Activated B cell treated with CpG ODN at 0.5 μM for 24 hours (primary cell): ENCODE measurements at regions of chr6 and their contacts with region 1.

Region 1: GRCh38 chr6:45714741-45715507 is 300.7 kb downstream of the CLIC5 start:
- DNase-seq: no peak
- ATAC-seq: peak; percentile 40
- H3K4me3 Mint-ChIP-seq: no peak overlapping the region
- H3K27ac Mint-ChIP-seq: no peak overlapping the region
- H3K4me1 Mint-ChIP-seq: peaks cover 29% of the 10 kb centered on the region
- H3K27me3 Mint-ChIP-seq: no peaks in the 10 kb centered on the region
- CTCF ChIP-seq: no peak

Region 2: DNA sequence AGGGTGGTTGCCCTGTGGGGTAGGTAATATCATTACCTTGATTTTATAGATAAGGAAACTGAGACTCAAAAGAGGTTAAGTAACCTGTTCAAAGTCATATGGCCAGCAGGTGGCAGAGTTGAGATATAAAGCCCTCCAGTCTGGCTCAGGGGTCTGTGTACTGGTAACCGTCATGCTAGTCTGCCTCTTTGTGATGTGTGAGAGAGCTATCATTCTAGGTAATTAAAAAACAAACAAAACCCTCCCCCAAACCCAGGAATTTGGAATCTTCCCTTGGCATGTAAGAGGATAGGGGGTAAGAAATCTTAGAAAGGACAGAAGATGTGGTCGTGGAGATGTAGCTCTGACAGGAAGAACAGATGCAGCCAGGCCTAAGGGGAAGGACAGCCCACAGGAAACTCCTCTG is 1121.4 kb before region 1 on chr6:
- CTCF ChIA-PET with region 1: interaction called, 12 read pairs
- POLR2A ChIA-PET with region 1: no interaction called
- intact Hi-C with region 1: loop called (anchors 1 kb)
- DNase-seq: no peak
- ATAC-seq: peak; percentile 42
- H3K4me3 Mint-ChIP-seq: no peak overlapping the region
- H3K27ac Mint-ChIP-seq: no peak overlapping the region
- H3K4me1 Mint-ChIP-seq: no peaks in the 10 kb centered on the region
- H3K27me3 Mint-ChIP-seq: peaks cover 25% of the 10 kb centered on the region
- CTCF ChIP-seq: no peak

Region 3: DNA sequence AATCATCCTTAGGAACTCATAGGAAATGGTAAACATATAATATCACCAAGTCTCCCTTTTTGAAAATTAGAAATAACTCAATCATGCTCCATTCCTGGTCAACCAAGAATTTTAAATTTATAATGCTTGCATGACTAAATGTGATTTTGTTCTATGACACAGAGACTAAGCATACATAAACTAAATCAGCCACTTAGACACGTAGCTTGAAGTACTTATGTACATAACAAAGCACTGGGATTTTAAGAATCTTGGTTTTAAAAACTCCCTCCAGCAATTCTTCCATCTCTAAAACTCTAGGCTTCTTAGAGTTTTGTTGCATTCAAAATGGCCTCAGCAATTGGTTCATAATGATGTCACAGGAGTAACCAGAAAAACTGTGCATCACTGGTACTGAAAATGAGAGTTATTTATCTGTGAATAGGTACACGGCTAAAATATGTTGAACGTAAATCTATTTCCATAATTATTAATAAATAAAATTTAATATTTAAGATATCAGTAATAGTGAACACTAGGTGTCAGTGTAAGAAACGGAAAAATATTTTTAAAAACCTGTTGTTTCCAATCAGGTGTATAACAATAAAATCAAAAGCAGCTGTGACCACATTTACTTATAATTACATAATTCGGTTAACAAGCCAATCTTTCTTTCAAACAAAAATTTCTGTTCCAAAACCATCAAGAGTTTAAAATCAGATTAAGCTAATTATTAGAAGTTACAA is 628.4 kb before region 1 on chr6:
- CTCF ChIA-PET with region 1: interaction called, 7 read pairs
- POLR2A ChIA-PET with region 1: no interaction called
- intact Hi-C with region 1: loop called (anchors 5 kb)
- DNase-seq: no peak
- ATAC-seq: no peak
- H3K4me3 Mint-ChIP-seq: no peak overlapping the region
- H3K27ac Mint-ChIP-seq: no peak overlapping the region
- H3K4me1 Mint-ChIP-seq: no peaks in the 10 kb centered on the region
- H3K27me3 Mint-ChIP-seq: no peaks in the 10 kb centered on the region
- CTCF ChIP-seq: no peak

Region 4: GRCh38 chr6:45479834-45480751 is 234.8 kb before region 1 on chr6:
- CTCF ChIA-PET with region 1: no interaction called
- POLR2A ChIA-PET with region 1: no interaction called
- intact Hi-C with region 1: loop called (anchors 5 kb)
- DNase-seq: no peak
- ATAC-seq: peak; percentile 65
- H3K4me3 Mint-ChIP-seq: no peak overlapping the region
- H3K27ac Mint-ChIP-seq: no peak overlapping the region
- H3K4me1 Mint-ChIP-seq: peaks cover 18% of the 10 kb centered on the region
- H3K27me3 Mint-ChIP-seq: no peaks in the 10 kb centered on the region
- CTCF ChIP-seq: no peak

Region 5: DNA sequence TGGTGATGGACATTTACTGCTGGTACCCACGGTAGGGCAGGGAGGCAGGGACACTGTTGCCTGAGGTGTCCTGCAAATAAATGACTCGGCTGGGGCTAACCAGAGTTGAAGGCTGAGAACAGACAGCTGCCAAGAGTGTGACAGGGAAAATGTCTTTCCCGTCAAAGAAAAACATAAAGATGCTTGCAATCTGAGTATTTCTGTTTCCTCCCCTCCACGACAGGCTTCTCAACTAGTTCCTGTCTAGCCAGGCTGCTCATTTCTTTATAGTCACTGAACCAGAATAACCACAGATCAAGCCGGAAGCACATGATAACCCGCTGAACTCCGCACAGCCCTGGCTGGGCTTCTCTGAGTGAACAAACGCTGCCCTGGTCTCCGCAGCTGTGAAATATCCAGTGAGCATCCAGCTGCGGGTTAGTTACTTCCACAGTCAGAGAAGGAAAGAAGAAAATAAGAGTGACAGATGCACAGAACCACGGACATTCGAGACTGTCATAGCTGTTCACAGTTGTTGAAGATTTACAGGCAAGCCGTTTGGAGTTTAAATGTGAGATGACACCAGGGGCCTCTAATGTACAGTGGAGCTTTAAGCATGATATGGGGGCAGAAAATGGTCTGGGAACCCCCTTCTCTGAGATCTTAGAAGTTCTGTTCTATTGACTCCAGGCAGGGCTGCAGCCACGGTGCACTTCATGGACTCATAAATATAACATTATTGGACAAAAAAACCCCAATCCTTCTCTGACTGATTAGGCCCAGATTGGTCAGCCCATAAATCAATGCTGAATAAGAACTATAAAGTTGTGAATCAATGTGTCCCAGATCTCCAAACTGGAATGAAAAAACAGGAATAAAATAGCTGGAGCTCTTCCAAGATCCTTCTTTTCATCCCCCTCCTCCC is 37.3 kb before region 1 on chr6:
- CTCF ChIA-PET with region 1: interaction called, 8 read pairs
- POLR2A ChIA-PET with region 1: interaction called, 3 read pairs
- intact Hi-C with region 1: loop called (anchors 1 kb)
- DNase-seq: peak; percentile 54
- ATAC-seq: peak; percentile 76
- H3K4me3 Mint-ChIP-seq: peak overlapping the region; percentile 73
- H3K27ac Mint-ChIP-seq: peak overlapping the region; percentile 85
- H3K4me1 Mint-ChIP-seq: peaks cover 53% of the 10 kb centered on the region
- H3K27me3 Mint-ChIP-seq: no peaks in the 10 kb centered on the region
- CTCF ChIP-seq: no peak

Region 6: DNA sequence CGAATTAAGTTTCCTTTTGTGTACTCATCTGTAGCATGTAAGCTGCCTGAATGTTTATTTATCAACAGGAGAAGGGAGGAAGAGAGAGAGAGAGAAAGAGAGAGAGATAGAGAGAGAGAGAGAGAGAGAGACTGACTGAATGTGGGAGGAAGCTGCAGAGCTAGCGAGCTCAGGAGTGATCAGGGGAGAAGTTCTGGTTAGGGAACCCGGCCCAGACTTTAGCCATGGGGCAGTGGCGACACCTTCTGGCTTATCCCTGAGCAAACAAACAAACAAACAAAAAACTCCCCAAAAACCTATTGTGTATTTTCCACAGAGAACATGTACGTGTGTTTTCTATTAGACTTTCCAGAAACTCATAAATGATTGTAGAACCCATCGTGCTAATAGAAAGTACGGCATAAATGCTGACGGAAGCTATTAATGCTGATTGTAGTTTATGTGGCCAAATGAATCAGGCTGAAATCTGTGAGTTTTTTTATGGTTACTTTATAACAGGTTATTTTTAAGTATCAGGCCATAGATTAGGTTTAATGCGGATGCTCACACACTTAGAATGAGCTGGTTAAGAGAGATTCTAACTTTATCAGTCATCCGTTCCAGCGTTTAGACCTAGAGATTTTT is 207.9 kb after region 1 on chr6:
- CTCF ChIA-PET with region 1: interaction called, 14 read pairs
- POLR2A ChIA-PET with region 1: no interaction called
- intact Hi-C with region 1: loop called (anchors 1 kb)
- DNase-seq: peak; percentile 26
- ATAC-seq: no peak
- H3K4me3 Mint-ChIP-seq: no peak overlapping the region
- H3K27ac Mint-ChIP-seq: no peak overlapping the region
- H3K4me1 Mint-ChIP-seq: no peaks in the 10 kb centered on the region
- H3K27me3 Mint-ChIP-seq: peaks cover 7% of the 10 kb centered on the region
- CTCF ChIP-seq: peak; percentile 47